GM12878 (cell line): ENCODE measurements at regions of chr19 and their contacts with region 1.

Region 1: DNA sequence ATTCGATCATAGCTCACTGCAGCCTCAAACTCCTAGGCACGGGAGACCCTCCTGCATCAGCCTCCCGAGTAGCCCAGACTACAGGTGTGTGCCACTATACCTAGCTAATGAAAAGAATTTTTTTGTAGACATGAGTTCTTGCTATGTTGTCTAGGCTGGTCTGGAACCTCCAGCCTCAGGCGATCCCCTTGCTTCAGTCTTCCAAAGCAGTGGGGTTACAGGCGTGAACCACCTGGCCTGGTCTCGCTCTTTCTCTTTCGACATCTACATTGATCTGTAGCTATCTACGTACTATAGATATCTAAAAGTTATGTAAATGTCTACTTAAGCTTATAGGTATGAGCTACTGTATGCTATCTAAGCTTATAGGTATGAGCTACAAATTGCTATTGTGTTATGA is 32.4 kb downstream of the NUMBL start:
- DNase-seq: no peak
- ATAC-seq: no peak
- H3K4me3 ChIP-seq: no peak overlapping the region
- H3K27ac ChIP-seq: no peak overlapping the region
- H3K4me1 ChIP-seq: no peaks in the 10 kb centered on the region
- H3K27me3 ChIP-seq: no peaks in the 10 kb centered on the region
- CTCF ChIP-seq: no peak
- EP300 ChIP-seq: no peak
- POLR2A ChIP-seq: no peak
- RAD21 ChIP-seq: no peak

Region 2: DNA sequence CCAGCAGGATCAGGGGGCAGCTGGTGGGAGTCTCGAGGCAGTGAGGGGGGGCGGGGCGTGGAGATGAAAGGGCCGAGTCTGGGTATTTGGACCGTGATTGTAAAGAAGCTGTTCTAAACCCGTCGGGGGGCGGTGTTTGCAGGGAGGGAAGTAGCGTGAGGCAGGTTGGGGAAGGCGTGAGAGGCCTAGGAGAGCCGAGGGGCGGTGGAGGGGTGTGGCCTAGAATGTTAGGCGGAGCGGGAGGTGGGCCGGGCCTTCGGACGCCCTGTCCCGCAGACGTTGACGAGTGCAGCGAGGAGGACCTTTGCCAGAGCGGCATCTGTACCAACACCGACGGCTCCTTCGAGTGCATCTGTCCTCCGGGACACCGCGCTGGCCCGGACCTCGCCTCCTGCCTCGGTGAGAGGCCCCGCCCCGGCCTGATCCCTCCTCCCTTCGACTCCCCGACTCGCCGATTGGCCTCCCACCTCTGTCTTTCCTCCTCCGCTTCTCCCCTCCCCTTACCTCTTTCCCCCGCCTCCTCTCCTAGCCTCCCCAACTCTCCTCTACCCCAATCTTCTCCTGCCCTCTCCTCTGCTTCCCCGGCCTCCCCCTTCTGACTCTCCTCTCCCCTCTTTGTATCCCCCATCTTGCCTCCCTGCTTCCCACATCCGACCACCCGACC is 44.3 kb before region 1 on chr19:
- CTCF ChIA-PET with region 1: no interaction called
- POLR2A ChIA-PET with region 1: no interaction called
- RAD21 ChIA-PET with region 1: no interaction called
- SMC1A ChIA-PET with region 1: no interaction called
- in situ Hi-C with region 1: no loop called
- intact Hi-C with region 1: no loop called
- DNase-seq: peak; percentile 57
- ATAC-seq: peak; percentile 78
- H3K4me3 ChIP-seq: peak overlapping the region; percentile 98
- H3K27ac ChIP-seq: peak overlapping the region; percentile 38; the same call in 1 of the 2 replicates
- H3K4me1 ChIP-seq: peaks cover 12% of the 10 kb centered on the region
- H3K27me3 ChIP-seq: no peaks in the 10 kb centered on the region; a peak in 1 of 4 replicates
- CTCF ChIP-seq: no peak
- EP300 ChIP-seq: no peak
- POLR2A ChIP-seq: peak; percentile 68
- RAD21 ChIP-seq: no peak

Region 3: DNA sequence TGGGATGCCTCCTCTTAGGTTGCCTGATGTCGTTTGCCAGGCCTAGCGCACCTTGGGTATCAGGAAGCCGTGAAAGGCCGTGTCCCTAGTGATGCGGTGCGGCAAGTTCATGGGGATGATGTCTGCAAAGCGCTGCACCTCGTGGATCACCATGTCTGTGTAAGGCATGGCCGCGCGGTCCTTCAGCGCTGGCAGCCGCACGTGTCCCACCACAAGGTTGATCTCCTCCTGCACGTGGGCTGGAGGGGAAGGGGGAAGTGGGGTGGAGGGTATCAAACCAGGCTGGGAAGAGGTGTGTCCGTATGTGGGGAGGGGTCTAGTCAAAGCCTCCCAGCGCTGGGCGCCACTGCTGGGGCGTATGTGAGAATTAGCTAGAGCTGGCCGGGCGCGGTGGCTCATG is 164.1 kb after region 1 on chr19:
- CTCF ChIA-PET with region 1: interaction called, 76 read pairs
- POLR2A ChIA-PET with region 1: no interaction called
- RAD21 ChIA-PET with region 1: interaction called, 46 read pairs
- SMC1A ChIA-PET with region 1: interaction called, 56 read pairs
- in situ Hi-C with region 1: loop called (anchors 5 kb)
- intact Hi-C with region 1: loop called (anchors 1 kb)
- DNase-seq: no peak
- ATAC-seq: no peak
- H3K4me3 ChIP-seq: no peak overlapping the region
- H3K27ac ChIP-seq: no peak overlapping the region
- H3K4me1 ChIP-seq: peaks cover 11% of the 10 kb centered on the region
- H3K27me3 ChIP-seq: no peaks in the 10 kb centered on the region
- CTCF ChIP-seq: no peak
- EP300 ChIP-seq: no peak
- POLR2A ChIP-seq: no peak
- RAD21 ChIP-seq: no peak